Left cardiac atrium (tissue), 4 donors: ENCODE measurements at regions of chr16 and their contacts with region 1.

Region 1: GRCh38 chr16:27179500-27180072 is 23.7 kb upstream of the KDM8 start:
- DNase-seq: peak; percentile 89
- ATAC-seq: peak; percentile 95 to 97

Region 2: DNA sequence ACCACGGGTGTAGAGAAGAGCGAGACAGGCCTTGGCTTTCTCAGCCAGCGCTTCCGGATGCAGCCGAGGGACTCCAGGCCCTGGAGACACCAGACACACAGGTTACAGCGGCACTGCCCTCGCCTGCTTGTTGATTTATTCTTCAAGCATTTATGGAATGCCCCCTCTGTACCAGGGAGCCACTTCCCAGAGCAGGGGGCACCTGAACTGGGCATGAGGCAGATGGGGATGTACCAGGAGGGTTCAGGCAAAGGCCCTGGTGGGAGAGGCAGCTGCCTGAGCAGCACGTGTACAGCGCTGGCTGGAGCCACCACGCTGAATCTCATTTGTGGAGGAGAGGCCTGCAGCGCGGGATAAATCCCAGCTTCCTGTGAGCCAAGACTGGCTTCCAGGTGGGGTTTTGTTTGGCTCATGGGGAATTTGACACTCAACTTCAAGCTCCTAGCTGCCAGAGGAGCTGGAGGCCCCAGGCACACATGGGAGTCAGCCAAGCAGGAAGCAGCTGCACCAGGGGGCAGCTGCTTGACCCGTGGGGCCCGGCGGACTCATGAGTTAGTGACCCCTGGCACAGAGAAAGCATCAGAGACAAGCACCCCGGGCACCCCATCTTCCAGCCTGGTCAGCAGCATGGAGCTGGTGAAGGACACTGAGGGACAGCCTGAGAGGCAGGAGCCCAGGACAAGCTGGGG is 282.0 kb after region 1 on chr16:
- intact Hi-C with region 1: loop called in 1 of 2 experiments (anchors 5 kb)
- DNase-seq: no peak
- ATAC-seq: no peak